ENCODE measurements at regions of chr10 and their contacts with region 1.

Region 1: DNA sequence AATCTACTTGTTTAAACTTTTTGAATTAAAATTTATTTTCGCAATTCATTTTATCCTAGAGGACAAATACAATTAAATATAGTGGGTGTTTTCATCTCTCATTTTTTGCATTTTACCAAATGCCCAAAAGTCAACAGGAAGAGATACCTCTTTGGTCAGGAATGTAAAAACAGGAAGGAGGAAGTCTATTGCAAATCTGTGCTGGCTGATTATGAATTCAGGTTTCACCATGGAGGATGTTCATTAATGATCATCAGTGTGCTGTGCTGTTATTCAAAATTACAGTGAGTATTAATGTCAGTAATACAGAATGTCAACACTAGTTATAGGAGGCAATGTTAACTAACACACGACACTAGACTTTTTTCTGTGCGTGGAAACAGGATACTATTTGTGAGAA is 24.7 kb downstream of the EXOC6 start:
- DNase-seq: no peak
- ATAC-seq: no peak
- H3K4me3 ChIP-seq: no peak overlapping the region
- H3K27ac ChIP-seq: no peak overlapping the region
- H3K4me1 ChIP-seq: peaks cover 15% of the 10 kb centered on the region
- H3K27me3 ChIP-seq: no peaks in the 10 kb centered on the region
- CTCF ChIP-seq: no peak

Region 2: DNA sequence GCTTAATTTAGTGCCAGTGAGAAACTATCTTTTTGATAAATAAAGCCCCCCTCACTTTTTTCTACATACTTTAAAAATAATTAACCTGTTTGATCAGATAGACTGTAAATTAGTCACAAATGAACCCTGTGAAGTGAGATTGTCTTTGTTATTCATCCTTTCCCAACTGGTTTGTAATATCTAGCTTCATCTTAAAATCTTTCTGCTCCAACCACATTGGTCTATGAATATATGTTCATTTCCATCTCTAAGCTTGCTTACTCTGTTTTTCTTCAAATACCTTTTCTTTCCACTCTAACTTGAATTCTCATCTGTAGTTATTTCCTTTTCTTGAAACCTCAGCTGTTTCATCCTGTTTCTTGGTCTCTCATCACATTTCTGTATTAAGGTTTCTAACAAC is 569.9 kb before region 1 on chr10:
- intact Hi-C with region 1: no loop called
- DNase-seq: no peak
- ATAC-seq: no peak
- H3K4me3 ChIP-seq: no peak overlapping the region
- H3K27ac ChIP-seq: no peak overlapping the region
- H3K4me1 ChIP-seq: peaks cover 20% of the 10 kb centered on the region
- H3K27me3 ChIP-seq: no peaks in the 10 kb centered on the region
- CTCF ChIP-seq: no peak

Region 3: GRCh38 chr10:92592761-92593618 is 280.0 kb before region 1 on chr10 and contains the start of gene KIF11:
- intact Hi-C with region 1: loop called in 1 of 2 experiments (anchors 10 kb)
- DNase-seq: peak; percentile 98
- ATAC-seq: peak; percentile 90 to 94 (median 92)
- H3K4me3 ChIP-seq: peak within 1 kb of the TSS; percentile 91
- H3K27ac ChIP-seq: peak within 1 kb of the TSS; percentile 90
- H3K4me1 ChIP-seq: peaks cover 5% of the 10 kb centered on the region
- H3K27me3 ChIP-seq: no peaks in the 10 kb centered on the region
- CTCF ChIP-seq: no peak
- total RNA-seq, gene KIF11: 0.21 to 0.34 (median 0.27) TPM

Region 4: GRCh38 chr10:92822060-92822634 is 50.9 kb before region 1 on chr10:
- intact Hi-C with region 1: loop called in 1 of 2 experiments (anchors 5 kb)
- DNase-seq: no peak
- ATAC-seq: no peak
- H3K4me3 ChIP-seq: no peak overlapping the region
- H3K27ac ChIP-seq: no peak overlapping the region
- H3K4me1 ChIP-seq: no peaks in the 10 kb centered on the region
- H3K27me3 ChIP-seq: peaks cover 0 to 2% (median 0%) of the 10 kb centered on the region in 3 donors
- CTCF ChIP-seq: no peak

Region 5: GRCh38 chr10:92839191-92840085 is 33.6 kb before region 1 on chr10:
- intact Hi-C with region 1: loop called in 1 of 2 experiments (anchors 5 kb)
- DNase-seq: peak; percentile 66 to 77
- ATAC-seq: peak in 2 of 4 donors; percentile 26 to 37
- H3K4me3 ChIP-seq: peak overlapping the region; percentile 8
- H3K27ac ChIP-seq: peak overlapping the region; percentile 69
- H3K4me1 ChIP-seq: peaks cover 22% of the 10 kb centered on the region
- H3K27me3 ChIP-seq: no peaks in the 10 kb centered on the region
- CTCF ChIP-seq: peak; percentile 16

Region 6: GRCh38 chr10:92914478-92915325 is 41.7 kb after region 1 on chr10:
- intact Hi-C with region 1: no loop called
- DNase-seq: peak in 1 of 2 donors; percentile 12
- ATAC-seq: peak; percentile 68 to 96 (median 92)
- H3K4me3 ChIP-seq: no peak overlapping the region
- H3K27ac ChIP-seq: no peak overlapping the region
- H3K4me1 ChIP-seq: no peaks in the 10 kb centered on the region
- H3K27me3 ChIP-seq: no peaks in the 10 kb centered on the region
- CTCF ChIP-seq: peak; percentile 57

Region 7: GRCh38 chr10:92929896-92930295 is 56.9 kb after region 1 on chr10:
- intact Hi-C with region 1: no loop called
- DNase-seq: no peak
- ATAC-seq: no peak
- H3K4me3 ChIP-seq: no peak overlapping the region
- H3K27ac ChIP-seq: no peak overlapping the region
- H3K4me1 ChIP-seq: no peaks in the 10 kb centered on the region
- H3K27me3 ChIP-seq: no peaks in the 10 kb centered on the region
- CTCF ChIP-seq: no peak